Motor neuron (in vitro differentiated cells): ENCODE measurements at regions of chr4 and their contacts with region 1.

Region 1: DNA sequence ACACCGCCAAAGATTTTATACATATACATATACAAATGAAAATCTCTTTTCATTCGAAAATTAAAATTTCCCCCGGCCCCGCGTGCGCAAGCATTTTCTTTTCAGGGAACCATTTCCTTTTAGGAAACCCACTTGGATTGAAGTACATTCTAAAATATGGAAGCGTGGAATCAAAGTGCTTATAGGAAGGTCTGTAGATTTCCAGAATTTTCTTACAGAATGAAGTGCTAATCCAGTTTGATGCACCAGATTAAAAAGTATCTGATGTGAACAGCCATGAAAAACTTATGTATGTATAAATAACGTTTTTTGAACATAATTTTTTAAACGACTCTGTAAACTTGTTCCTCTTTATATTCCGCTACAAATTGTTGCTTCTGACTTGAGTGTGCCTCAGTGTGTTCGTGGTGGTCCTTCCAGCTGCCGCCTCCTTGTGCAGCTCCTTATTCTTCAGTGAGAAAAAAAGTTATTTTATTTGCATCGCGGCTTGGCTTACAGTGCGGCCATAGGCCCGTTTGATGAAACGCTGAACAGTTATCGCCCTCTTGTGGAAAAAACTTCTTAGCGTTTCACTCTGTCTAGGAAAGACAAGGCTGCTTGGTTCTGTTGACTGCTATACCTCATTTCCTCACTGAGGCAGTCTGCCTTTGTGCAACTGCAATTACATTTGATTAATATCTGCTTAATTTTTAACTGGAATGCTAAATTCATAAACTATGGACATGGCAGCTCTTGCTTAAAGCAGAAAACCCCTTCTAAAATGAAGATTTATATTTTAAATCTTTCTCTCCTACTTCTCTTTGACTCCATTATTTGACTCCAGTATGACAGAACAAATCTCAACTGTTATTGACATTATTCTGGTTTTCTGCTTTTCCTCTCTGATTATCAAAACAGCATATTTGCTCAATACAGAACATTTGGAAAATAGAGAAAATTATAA is 4.7 kb upstream of the NKX6-1 start:
- ATAC-seq: peak in 4 of 8 experiments; percentile 11 to 89 (median 84)
- H3K4me3 ChIP-seq: no peak overlapping the region
- H3K27ac ChIP-seq: no peak overlapping the region
- H3K4me1 ChIP-seq: peaks cover 2 to 9% of the 10 kb centered on the region in 2 donors

Region 2: GRCh38 chr4:83639849-83640493 is 863.8 kb before region 1 on chr4:
- in situ Hi-C with region 1: loop called in 2 of 9 experiments (anchors 10 to 25 kb)
- ATAC-seq: peak; percentile 68 to 87 (median 78)
- H3K4me3 ChIP-seq: no peak overlapping the region
- H3K27ac ChIP-seq: no peak overlapping the region
- H3K4me1 ChIP-seq: peaks cover 0 to 5% of the 10 kb centered on the region in 2 donors

Region 3: GRCh38 chr4:83658806-83659495 is 844.8 kb before region 1 on chr4:
- in situ Hi-C with region 1: loop called in 3 of 9 experiments (anchors 10 to 25 kb)
- ATAC-seq: no peak
- H3K4me3 ChIP-seq: no peak overlapping the region
- H3K27ac ChIP-seq: no peak overlapping the region
- H3K4me1 ChIP-seq: no peaks in the 10 kb centered on the region

Region 4: GRCh38 chr4:83771113-83771705 is 732.6 kb before region 1 on chr4:
- in situ Hi-C with region 1: loop called in 5 of 9 experiments (anchors 10 to 25 kb)
- ATAC-seq: peak; percentile 87 to 96 (median 90)
- H3K4me3 ChIP-seq: no peak overlapping the region
- H3K27ac ChIP-seq: no peak overlapping the region
- H3K4me1 ChIP-seq: peaks cover 2 to 22% of the 10 kb centered on the region in 2 donors

Region 5: GRCh38 chr4:84167564-84167963 is 336.2 kb before region 1 on chr4:
- in situ Hi-C with region 1: no loop called
- ATAC-seq: peak; percentile 18 to 92 (median 80)
- H3K4me3 ChIP-seq: no peak overlapping the region
- H3K27ac ChIP-seq: no peak overlapping the region
- H3K4me1 ChIP-seq: peaks cover 11 to 12% of the 10 kb centered on the region in 2 donors

Region 6: GRCh38 chr4:84235126-84235944 is 268.4 kb before region 1 on chr4:
- in situ Hi-C with region 1: loop called in 1 of 9 experiments (anchors 25 kb)
- ATAC-seq: no peak
- H3K4me3 ChIP-seq: no peak overlapping the region
- H3K27ac ChIP-seq: no peak overlapping the region
- H3K4me1 ChIP-seq: no peaks in the 10 kb centered on the region

Region 7: GRCh38 chr4:84870398-84871163 is 366.8 kb after region 1 on chr4:
- in situ Hi-C with region 1: no loop called
- ATAC-seq: peak in 7 of 8 experiments; percentile 64 to 85 (median 77)
- H3K4me3 ChIP-seq: no peak overlapping the region
- H3K27ac ChIP-seq: no peak overlapping the region
- H3K4me1 ChIP-seq: peaks cover 3 to 8% of the 10 kb centered on the region in 2 donors